Body of pancreas (tissue), 4 donors: ENCODE measurements at regions of chr3 and their contacts with region 1.

Region 1: GRCh38 chr3:100254168-100254777 is 6.5 kb upstream of the TBC1D23 start:
- DNase-seq: peak; percentile 42 to 67 (median 60)
- ATAC-seq: peak; percentile 77
- H3K4me3 ChIP-seq: no peak overlapping the region
- H3K27ac ChIP-seq: no peak overlapping the region
- H3K4me1 ChIP-seq: peaks cover 9% of the 10 kb centered on the region
- H3K27me3 ChIP-seq: no peaks in the 10 kb centered on the region
- CTCF ChIP-seq: peak; percentile 58 to 82 (median 75)
- POLR2A ChIP-seq: no peak

Region 2: GRCh38 chr3:99846462-99847160 is 407.7 kb before region 1 on chr3:
- intact Hi-C with region 1: loop called (anchors 5 kb)
- DNase-seq: peak in 1 of 4 donors; percentile 20
- ATAC-seq: peak; percentile 40
- H3K4me3 ChIP-seq: no peak overlapping the region
- H3K27ac ChIP-seq: peak overlapping the region in 1 of 4 donors; percentile 4
- H3K4me1 ChIP-seq: peaks cover 20% of the 10 kb centered on the region
- H3K27me3 ChIP-seq: no peaks in the 10 kb centered on the region
- CTCF ChIP-seq: no peak
- POLR2A ChIP-seq: no peak

Region 3: DNA sequence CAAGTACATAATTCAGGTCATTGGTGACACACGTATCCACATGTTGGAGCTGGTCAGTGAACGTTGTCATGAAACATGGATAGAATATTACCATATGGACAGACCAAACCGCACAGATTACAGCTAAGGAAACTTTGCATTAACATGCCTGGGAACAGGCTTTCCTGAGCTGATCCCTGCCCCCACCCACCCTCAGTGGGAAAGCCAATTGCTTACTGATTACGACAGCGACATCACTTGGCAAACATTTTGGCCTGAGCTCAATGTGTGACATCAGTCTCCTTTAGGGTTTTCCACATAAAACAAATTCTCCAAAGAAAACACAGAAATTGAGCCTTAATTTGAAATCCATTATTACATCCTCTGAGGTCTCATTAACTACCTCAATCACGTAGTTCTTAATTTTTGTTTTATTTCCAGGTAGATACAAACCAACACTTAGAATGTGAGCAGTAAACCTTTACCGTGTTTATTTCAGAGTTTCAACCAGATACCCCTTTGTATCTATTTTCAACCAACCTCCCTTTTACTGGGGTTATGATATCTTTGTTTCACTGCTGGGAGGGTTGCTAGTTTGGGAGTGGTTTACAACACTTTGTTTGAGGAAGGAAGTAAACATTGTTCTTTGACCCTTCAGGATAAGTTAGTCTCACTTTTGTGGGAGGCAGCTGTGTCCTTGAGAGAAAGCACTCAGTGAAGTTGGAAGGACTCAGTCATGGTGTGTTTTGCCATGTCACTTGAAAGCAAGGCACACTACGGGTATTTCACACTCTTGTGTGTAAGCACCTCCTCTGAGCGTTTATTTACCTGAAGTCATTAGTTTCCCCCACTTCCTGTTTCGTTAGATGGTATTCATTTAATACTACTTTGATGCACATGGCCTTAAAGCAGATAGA is 333.5 kb before region 1 on chr3:
- intact Hi-C with region 1: no loop called
- DNase-seq: peak; percentile 78 to 87 (median 82)
- ATAC-seq: peak; percentile 94
- H3K4me3 ChIP-seq: no peak overlapping the region
- H3K27ac ChIP-seq: peak overlapping the region; percentile 51 to 84 (median 76)
- H3K4me1 ChIP-seq: peaks cover 26% of the 10 kb centered on the region
- H3K27me3 ChIP-seq: no peaks in the 10 kb centered on the region
- CTCF ChIP-seq: no peak
- POLR2A ChIP-seq: no peak

Region 4: GRCh38 chr3:99965077-99965476 is 289.2 kb before region 1 on chr3:
- intact Hi-C with region 1: no loop called
- DNase-seq: peak; percentile 38 to 72 (median 71)
- ATAC-seq: peak; percentile 81
- H3K4me3 ChIP-seq: no peak overlapping the region
- H3K27ac ChIP-seq: peak overlapping the region; percentile 57 to 85 (median 69)
- H3K4me1 ChIP-seq: peaks cover 31% of the 10 kb centered on the region
- H3K27me3 ChIP-seq: no peaks in the 10 kb centered on the region
- CTCF ChIP-seq: no peak
- POLR2A ChIP-seq: no peak

Region 5: DNA sequence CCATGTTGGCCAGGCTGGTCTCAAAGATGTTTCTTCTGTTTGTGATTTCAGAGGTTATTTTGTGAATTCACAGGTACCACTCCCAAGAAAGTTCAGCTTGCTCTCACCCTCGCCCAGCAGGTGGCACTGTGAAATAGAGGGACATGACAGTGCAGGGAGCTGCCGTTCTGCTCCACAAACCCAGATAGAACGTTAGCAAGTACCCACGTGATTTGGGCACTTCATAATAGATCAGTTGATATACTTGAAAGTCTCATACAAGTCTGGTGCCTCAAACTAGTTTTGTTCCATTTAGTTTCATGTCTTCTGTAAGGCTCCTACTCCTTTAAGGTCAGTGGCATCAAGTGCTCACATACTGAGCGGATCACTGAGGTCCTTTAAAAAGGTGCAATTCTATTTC is 185.4 kb before region 1 on chr3:
- intact Hi-C with region 1: loop called (anchors 10 kb)
- DNase-seq: peak; percentile 75 to 79 (median 78)
- ATAC-seq: peak; percentile 90
- H3K4me3 ChIP-seq: no peak overlapping the region
- H3K27ac ChIP-seq: no peak overlapping the region
- H3K4me1 ChIP-seq: peaks cover 11% of the 10 kb centered on the region
- H3K27me3 ChIP-seq: no peaks in the 10 kb centered on the region
- CTCF ChIP-seq: peak; percentile 47 to 76 (median 69)
- POLR2A ChIP-seq: no peak